Naive thymus-derived CD4-positive, alpha-beta T cell (primary cell): ENCODE measurements at regions of chr17 and their contacts with region 1.

Region 1: DNA sequence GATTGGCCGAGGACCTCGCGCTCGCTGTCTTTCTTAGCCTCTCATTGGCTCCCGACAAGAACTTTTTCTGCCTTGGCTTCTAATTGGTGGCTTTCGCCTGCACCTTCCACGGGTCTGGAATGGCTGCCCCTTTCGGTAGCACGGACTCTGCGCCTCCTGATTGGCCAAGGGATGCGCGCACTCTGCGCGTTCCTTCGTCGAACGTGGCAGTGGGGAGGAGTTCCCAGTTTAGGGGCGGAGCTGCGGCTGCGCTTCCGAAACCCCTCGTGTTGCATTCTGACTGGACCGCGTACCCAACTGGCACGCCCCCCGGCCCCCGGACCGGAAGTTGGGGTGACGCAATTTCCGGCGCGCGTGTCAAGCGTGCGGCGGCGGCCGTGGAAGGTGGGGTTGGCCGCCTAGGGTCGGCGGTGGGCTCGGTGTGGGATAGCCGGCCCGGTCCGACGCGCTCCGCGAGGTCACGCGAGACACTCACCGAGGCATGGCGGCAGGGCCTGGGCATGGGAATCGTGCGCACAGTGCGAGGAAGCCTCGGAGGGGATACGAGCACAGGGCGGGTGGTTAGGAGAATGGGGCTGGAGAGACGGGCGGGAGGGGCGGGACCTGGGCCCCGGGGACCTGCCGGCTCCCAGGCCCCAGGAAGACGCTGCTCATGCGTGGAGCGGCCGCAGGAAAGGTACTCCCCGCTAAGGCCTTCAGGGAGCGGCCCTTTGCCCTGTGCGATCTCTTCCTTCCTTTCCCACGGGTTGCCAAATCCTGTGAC is 602 bp upstream of the P4HB start:
- DNase-seq: peak; percentile 98 to 100 (median 100)
- ATAC-seq: peak; percentile 91
- H3K4me3 ChIP-seq: peak overlapping the region; percentile 83
- H3K4me3 Mint-ChIP-seq: peak overlapping the region; percentile 81 to 99 (median 90)
- H3K27ac ChIP-seq: peak overlapping the region; percentile 95
- H3K27ac Mint-ChIP-seq: peak overlapping the region; percentile 89 to 100 (median 98)
- H3K4me1 ChIP-seq: peaks cover 20 to 27% of the 10 kb centered on the region in 2 donors
- H3K4me1 Mint-ChIP-seq: peaks cover 19 to 53% (median 43%) of the 10 kb centered on the region in 7 donors
- H3K27me3 ChIP-seq: no peaks in the 10 kb centered on the region
- H3K27me3 Mint-ChIP-seq: peaks cover 0 to 5% (median 0%) of the 10 kb centered on the region in 5 donors

Region 2: GRCh38 chr17:80454557-80455335 is 1406.2 kb before region 1 on chr17:
- CTCF ChIA-PET with region 1: no interaction called
- POLR2A ChIA-PET with region 1: no interaction called
- intact Hi-C with region 1: loop called in 1 of 2 experiments (anchors 10 kb)
- DNase-seq: peak; percentile 91 to 97 (median 95)
- ATAC-seq: peak; percentile 95
- H3K4me3 ChIP-seq: peak overlapping the region; percentile 83
- H3K4me3 Mint-ChIP-seq: peak overlapping the region; percentile 86 to 98 (median 92)
- H3K27ac ChIP-seq: peak overlapping the region; percentile 100
- H3K27ac Mint-ChIP-seq: peak overlapping the region; percentile 94 to 99 (median 95)
- H3K4me1 ChIP-seq: peaks cover 11 to 14% of the 10 kb centered on the region in 2 donors
- H3K4me1 Mint-ChIP-seq: peaks cover 0 to 35% (median 15%) of the 10 kb centered on the region in 7 donors
- H3K27me3 ChIP-seq: peaks cover 0 to 3% of the 10 kb centered on the region in 2 donors
- H3K27me3 Mint-ChIP-seq: peaks cover 0 to 22% (median 20%) of the 10 kb centered on the region in 5 donors

Region 3: DNA sequence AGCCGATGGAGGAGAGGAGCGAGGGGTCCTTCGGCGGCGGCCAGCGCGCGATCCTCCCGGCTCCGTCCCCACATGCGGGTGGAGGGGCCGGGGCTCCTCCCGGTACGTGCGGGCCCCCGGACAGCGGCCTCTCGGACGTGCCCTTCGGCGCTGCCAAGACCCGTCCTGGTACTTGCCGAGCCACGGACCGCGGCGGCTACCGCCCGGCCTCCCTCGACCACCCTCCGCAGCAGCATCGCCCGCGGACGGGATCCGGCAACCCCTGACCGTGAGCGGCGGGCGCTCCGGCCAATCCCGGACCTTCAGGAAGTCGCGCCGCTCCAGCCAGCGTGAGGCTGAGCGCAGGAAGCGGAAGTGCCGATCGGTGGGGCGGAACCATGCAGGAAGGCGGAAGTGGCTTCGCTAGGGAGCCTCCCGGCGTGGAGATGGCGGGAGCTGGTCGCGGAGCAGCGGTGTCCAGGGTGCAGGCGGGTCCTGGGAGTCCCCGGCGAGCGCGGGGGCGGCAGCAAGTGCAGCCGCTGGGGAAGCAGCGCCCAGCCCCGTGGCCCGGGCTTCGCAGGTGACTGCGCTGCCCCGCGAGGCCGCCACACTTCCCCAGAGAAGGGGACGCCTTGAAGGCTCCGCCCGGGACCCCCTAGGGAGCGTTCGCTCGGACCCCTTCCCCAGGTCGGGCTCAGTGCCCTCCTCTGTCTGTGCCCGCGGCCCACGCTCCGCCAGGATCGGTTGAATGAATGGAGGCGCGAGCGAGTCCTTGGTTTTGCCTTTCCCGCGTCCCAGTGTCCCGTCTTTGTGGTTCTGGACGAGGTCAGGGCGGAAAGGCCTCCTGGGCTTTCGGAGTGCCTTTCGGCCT is 194.4 kb before region 1 on chr17 and contains the starts of genes CCDC137 and OXLD1:
- CTCF ChIA-PET with region 1: no interaction called
- POLR2A ChIA-PET with region 1: interaction called, 3 read pairs
- intact Hi-C with region 1: loop called in 1 of 2 experiments (anchors 5 kb)
- DNase-seq: peak; percentile 82 to 93 (median 89)
- ATAC-seq: peak; percentile 94
- H3K4me3 ChIP-seq: peak within 1 kb of the TSS; percentile 86
- H3K4me3 Mint-ChIP-seq: peak within 1 kb of the TSS; percentile 88 to 99 (median 94)
- H3K27ac ChIP-seq: peak within 1 kb of the TSS; percentile 93
- H3K27ac Mint-ChIP-seq: peak within 1 kb of the TSS; percentile 84 to 97 (median 92)
- H3K4me1 ChIP-seq: peaks cover 35 to 50% of the 10 kb centered on the region in 2 donors
- H3K4me1 Mint-ChIP-seq: peaks cover 17 to 62% (median 43%) of the 10 kb centered on the region in 7 donors
- H3K27me3 ChIP-seq: no peaks in the 10 kb centered on the region
- H3K27me3 Mint-ChIP-seq: no peaks in the 10 kb centered on the region
- total RNA-seq, gene CCDC137: 16.3 to 33.5 (median 27.1) TPM
- total RNA-seq, gene OXLD1: 35.9 to 61.9 (median 47.5) TPM

Region 4: DNA sequence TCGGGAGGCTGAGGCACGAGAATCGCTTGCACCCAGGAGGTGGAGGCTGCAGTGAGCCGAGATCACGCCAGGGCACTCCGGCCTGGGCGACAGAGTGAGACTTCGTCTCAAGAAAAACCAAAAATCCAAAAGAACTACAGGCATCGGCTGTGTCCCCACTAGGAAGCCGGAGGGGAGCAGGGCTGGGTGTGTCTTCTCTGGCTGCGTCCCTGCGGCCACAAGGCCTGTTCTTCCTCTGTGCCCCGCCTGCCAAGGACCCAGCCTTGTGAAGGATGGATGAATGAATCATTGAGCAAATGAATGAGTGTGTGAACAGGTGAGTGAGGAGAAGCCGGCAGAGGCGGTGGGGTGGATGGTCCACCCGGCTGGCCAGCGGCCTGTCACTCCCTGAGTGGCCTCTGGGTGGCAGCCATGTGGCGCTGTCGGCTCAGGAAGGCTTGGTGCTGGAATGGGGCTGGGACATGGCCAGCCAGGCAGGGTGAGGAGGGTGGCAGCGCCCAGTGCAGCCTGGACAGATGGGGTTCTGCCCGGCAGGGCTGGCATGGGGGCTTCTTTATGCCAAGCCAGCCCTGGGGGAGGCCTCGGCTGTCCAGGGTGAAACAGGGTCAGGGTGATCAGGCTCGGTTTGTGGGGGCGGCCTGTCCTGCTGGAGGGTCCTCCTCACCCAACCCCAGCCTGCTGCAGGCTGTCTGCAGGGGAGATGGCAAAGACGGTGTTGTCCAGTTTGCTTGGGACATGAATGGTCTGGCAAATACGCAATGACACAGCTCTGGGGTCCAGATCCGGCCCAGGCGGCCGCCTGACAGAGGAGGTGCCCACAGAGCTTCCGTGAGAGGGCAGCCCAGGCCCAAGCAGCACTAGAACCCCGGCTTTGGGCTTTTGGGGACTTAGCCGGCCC is 127.2 kb before region 1 on chr17:
- CTCF ChIA-PET with region 1: no interaction called
- POLR2A ChIA-PET with region 1: no interaction called
- intact Hi-C with region 1: loop called in 1 of 2 experiments (anchors 1 kb)
- DNase-seq: peak in 7 of 9 donors; percentile 33 to 78 (median 42)
- ATAC-seq: peak; percentile 83
- H3K4me3 ChIP-seq: no peak overlapping the region
- H3K4me3 Mint-ChIP-seq: peak overlapping the region in 1 of 10 donors; percentile 50
- H3K27ac ChIP-seq: no peak overlapping the region
- H3K27ac Mint-ChIP-seq: peak overlapping the region in 1 of 9 donors; percentile 55
- H3K4me1 ChIP-seq: no peaks in the 10 kb centered on the region
- H3K4me1 Mint-ChIP-seq: peaks cover 4 to 11% (median 8%) of the 10 kb centered on the region in 7 donors
- H3K27me3 ChIP-seq: peaks cover 0 to 2% of the 10 kb centered on the region in 2 donors
- H3K27me3 Mint-ChIP-seq: peaks cover 17 to 35% (median 26%) of the 10 kb centered on the region in 5 donors

Region 5: GRCh38 chr17:81911277-81911961 is 50.5 kb after region 1 on chr17 and contains the start of gene PCYT2:
- CTCF ChIA-PET with region 1: no interaction called
- POLR2A ChIA-PET with region 1: no interaction called
- intact Hi-C with region 1: loop called (anchors 1 to 5 kb)
- DNase-seq: peak; percentile 84 to 95 (median 92)
- ATAC-seq: peak; percentile 97
- H3K4me3 ChIP-seq: peak within 1 kb of the TSS; percentile 70
- H3K4me3 Mint-ChIP-seq: peak within 1 kb of the TSS; percentile 72 to 92 (median 86)
- H3K27ac ChIP-seq: peak within 1 kb of the TSS; percentile 68
- H3K27ac Mint-ChIP-seq: peak within 1 kb of the TSS in 6 of 9 donors; percentile 33 to 85 (median 54)
- H3K4me1 ChIP-seq: peaks cover 8 to 12% of the 10 kb centered on the region in 2 donors
- H3K4me1 Mint-ChIP-seq: peaks cover 6 to 33% (median 16%) of the 10 kb centered on the region in 7 donors
- H3K27me3 ChIP-seq: no peaks in the 10 kb centered on the region
- H3K27me3 Mint-ChIP-seq: no peaks in the 10 kb centered on the region
- total RNA-seq, gene PCYT2: 17.5 to 43.6 (median 35.2) TPM

Region 6: DNA sequence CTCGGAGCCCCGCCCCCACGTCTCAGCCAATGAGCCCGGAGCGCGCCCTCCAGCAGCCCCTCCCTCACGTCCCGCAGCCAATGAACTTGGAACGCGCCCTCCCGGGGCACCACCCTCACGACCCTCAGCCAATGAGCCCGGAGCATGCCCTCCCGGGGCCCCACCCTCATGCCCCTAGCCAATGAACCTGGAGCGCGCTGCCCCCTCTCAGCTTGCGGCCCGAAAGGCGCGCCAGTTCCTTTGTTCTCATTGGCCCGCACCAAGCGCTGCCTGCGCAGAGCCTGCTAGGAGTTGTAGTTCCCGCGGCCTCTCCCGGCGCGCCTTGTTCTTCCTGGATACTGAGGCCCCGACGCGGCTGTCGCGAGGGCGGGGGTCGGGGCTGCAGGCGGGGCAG is 162.0 kb after region 1 on chr17 and contains the start of gene LRRC45:
- CTCF ChIA-PET with region 1: no interaction called
- POLR2A ChIA-PET with region 1: no interaction called
- intact Hi-C with region 1: loop called in 1 of 2 experiments (anchors 1 kb)
- DNase-seq: peak; percentile 97 to 100 (median 100)
- ATAC-seq: peak; percentile 97
- H3K4me3 ChIP-seq: peak within 1 kb of the TSS; percentile 71
- H3K4me3 Mint-ChIP-seq: peak within 1 kb of the TSS; percentile 80 to 91 (median 84)
- H3K27ac ChIP-seq: peak within 1 kb of the TSS; percentile 65
- H3K27ac Mint-ChIP-seq: peak within 1 kb of the TSS in 7 of 9 donors; percentile 41 to 88 (median 66)
- H3K4me1 ChIP-seq: peaks cover 16 to 29% of the 10 kb centered on the region in 2 donors
- H3K4me1 Mint-ChIP-seq: peaks cover 7 to 28% (median 22%) of the 10 kb centered on the region in 7 donors
- H3K27me3 ChIP-seq: no peaks in the 10 kb centered on the region
- H3K27me3 Mint-ChIP-seq: no peaks in the 10 kb centered on the region
- total RNA-seq, gene LRRC45: 9.2 to 39.1 (median 15.0) TPM